Common myeloid progenitor, CD34-positive (primary cell): ENCODE measurements at regions of chr5 and their contacts with region 1.

Region 1: GRCh38 chr5:98768160-98769005 is 5.1 kb upstream of the RGMB start:
- DNase-seq: peak; percentile 36 to 39 (median 38)
- H3K4me3 ChIP-seq: peak overlapping the region; percentile 4 to 84 (median 69)
- H3K27ac ChIP-seq: no peak overlapping the region
- H3K4me1 ChIP-seq: peaks cover 12 to 43% (median 42%) of the 10 kb centered on the region in 4 experiments
- H3K27me3 ChIP-seq: peaks cover 10 to 75% (median 41%) of the 10 kb centered on the region in 5 experiments

Region 2: GRCh38 chr5:98796197-98796972 is 28.0 kb after region 1 on chr5:
- CTCF ChIA-PET with region 1: interaction called, 31 read pairs
- POLR2A ChIA-PET with region 1: no interaction called
- DNase-seq: peak; percentile 39 to 67 (median 63)
- H3K4me3 ChIP-seq: no peak overlapping the region
- H3K27ac ChIP-seq: no peak overlapping the region
- H3K4me1 ChIP-seq: no peaks in the 10 kb centered on the region
- H3K27me3 ChIP-seq: peaks cover 0 to 6% (median 2%) of the 10 kb centered on the region in 5 experiments

Region 3: DNA sequence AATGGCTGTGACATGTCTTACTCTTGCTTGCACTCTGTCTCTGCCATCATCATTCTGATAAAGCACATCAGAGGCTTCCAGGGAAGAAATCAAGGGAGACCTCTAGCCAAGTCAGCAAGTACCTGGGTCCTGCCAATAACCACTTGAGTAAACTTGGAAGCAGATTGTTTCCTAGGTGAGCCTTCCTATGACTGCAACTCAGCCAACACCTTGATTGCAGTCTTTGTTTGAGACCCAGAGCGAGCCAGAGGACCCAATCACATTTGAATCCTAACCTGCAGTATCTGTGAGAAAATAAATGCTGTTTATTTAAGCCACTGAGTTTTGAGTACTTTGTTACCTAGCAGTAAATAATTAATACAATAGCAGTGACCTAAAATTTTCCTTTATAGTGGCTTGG is 517.2 kb after region 1 on chr5:
- CTCF ChIA-PET with region 1: no interaction called
- POLR2A ChIA-PET with region 1: no interaction called
- DNase-seq: no peak
- H3K4me3 ChIP-seq: no peak overlapping the region
- H3K27ac ChIP-seq: no peak overlapping the region
- H3K4me1 ChIP-seq: no peaks in the 10 kb centered on the region
- H3K27me3 ChIP-seq: no peaks in the 10 kb centered on the region